CD4-positive, alpha-beta T cell (primary cell): ENCODE measurements at regions of chr5 and their contacts with region 1.

Region 1: GRCh38 chr5:90529194-90529938 is at the start of gene LYSMD3:
- DNase-seq: peak; percentile 95 to 99 (median 97)
- ATAC-seq: peak; percentile 87
- H3K4me3 ChIP-seq: peak within 1 kb of the TSS; percentile 95
- H3K4me3 Mint-ChIP-seq: peak within 1 kb of the TSS; percentile 99
- H3K27ac ChIP-seq: peak within 1 kb of the TSS; percentile 94 to 95
- H3K27ac Mint-ChIP-seq: peak within 1 kb of the TSS; percentile 93
- H3K4me1 ChIP-seq: peaks cover 12% of the 10 kb centered on the region
- H3K4me1 Mint-ChIP-seq: peaks cover 33% of the 10 kb centered on the region
- H3K27me3 ChIP-seq: peaks cover 7 to 17% of the 10 kb centered on the region in 2 experiments
- H3K27me3 Mint-ChIP-seq: peaks cover 21% of the 10 kb centered on the region
- CTCF ChIP-seq: no peak
- total RNA-seq, gene LYSMD3: 27.6 to 32.8 TPM

Region 2: DNA sequence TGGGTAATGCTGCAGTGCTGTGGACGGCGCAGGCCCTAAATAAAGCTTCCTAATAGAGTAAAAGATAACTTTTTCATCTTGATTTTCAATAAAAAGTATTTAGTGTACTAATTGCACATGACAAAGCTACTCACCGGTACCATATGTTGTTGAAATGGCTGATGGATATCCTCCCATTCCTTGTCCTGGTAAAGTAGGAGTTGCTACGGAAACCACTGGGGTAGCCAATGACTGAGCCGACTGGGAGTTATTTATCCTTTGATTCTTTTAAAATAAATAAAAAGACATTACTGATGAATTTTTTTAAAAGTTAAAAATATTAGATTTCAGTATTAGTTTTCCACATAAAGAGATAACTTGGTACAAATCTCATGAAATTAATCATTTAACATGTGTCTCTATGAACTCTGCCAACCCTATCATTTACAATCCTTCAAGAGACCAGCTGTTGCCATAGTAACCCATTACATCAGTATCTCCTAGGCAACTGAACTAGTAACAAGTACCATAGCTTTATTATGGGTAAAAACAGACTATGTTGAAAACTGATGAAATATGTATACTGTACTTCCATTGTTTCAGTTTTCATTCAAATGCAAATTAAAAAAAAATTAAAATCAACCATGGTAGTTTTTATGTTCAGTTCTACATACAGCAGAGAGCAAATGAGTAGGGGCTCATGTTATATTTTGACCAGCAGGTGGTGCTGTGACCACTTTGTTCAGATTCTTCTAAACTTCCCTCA is 1800.1 kb before region 1 on chr5:
- CTCF ChIA-PET with region 1: interaction called, 3 read pairs
- POLR2A ChIA-PET with region 1: no interaction called
- intact Hi-C with region 1: loop called (anchors 5 kb)
- DNase-seq: peak in 13 of 14 experiments; percentile 7 to 79 (median 25)
- ATAC-seq: peak; percentile 83
- H3K4me3 ChIP-seq: no peak overlapping the region
- H3K4me3 Mint-ChIP-seq: no peak overlapping the region
- H3K27ac ChIP-seq: no peak overlapping the region
- H3K27ac Mint-ChIP-seq: no peak overlapping the region
- H3K4me1 ChIP-seq: no peaks in the 10 kb centered on the region
- H3K4me1 Mint-ChIP-seq: peaks cover 4% of the 10 kb centered on the region
- H3K27me3 ChIP-seq: peaks cover 1 to 7% of the 10 kb centered on the region in 2 experiments
- H3K27me3 Mint-ChIP-seq: peaks cover 26% of the 10 kb centered on the region
- CTCF ChIP-seq: peak; percentile 79

Region 3: GRCh38 chr5:90409318-90410177 is 119.8 kb before region 1 on chr5 and contains the start of gene CETN3:
- CTCF ChIA-PET with region 1: interaction called, 8 read pairs
- POLR2A ChIA-PET with region 1: interaction called, 41 read pairs
- intact Hi-C with region 1: loop called (anchors 2 kb)
- DNase-seq: peak; percentile 80 to 95 (median 86)
- ATAC-seq: peak; percentile 91
- H3K4me3 ChIP-seq: peak within 1 kb of the TSS; percentile 82
- H3K4me3 Mint-ChIP-seq: no peak within 1 kb of the TSS
- H3K27ac ChIP-seq: peak within 1 kb of the TSS; percentile 92 to 94
- H3K27ac Mint-ChIP-seq: no peak within 1 kb of the TSS
- H3K4me1 ChIP-seq: peaks cover 7% of the 10 kb centered on the region
- H3K4me1 Mint-ChIP-seq: peaks cover 13% of the 10 kb centered on the region
- H3K27me3 ChIP-seq: no peaks in the 10 kb centered on the region
- H3K27me3 Mint-ChIP-seq: no peaks in the 10 kb centered on the region
- CTCF ChIP-seq: no peak
- total RNA-seq, gene CETN3: 3.2 to 4.9 TPM

Region 4: GRCh38 chr5:90434116-90434714 is 95.2 kb before region 1 on chr5:
- CTCF ChIA-PET with region 1: interaction called, 10 read pairs
- POLR2A ChIA-PET with region 1: interaction called, 17 read pairs
- intact Hi-C with region 1: loop called in 1 of 2 experiments (anchors 1 kb)
- DNase-seq: peak; percentile 17 to 61 (median 38)
- ATAC-seq: peak; percentile 52
- H3K4me3 ChIP-seq: no peak overlapping the region
- H3K4me3 Mint-ChIP-seq: no peak overlapping the region
- H3K27ac ChIP-seq: no peak overlapping the region
- H3K27ac Mint-ChIP-seq: no peak overlapping the region
- H3K4me1 ChIP-seq: no peaks in the 10 kb centered on the region
- H3K4me1 Mint-ChIP-seq: no peaks in the 10 kb centered on the region
- H3K27me3 ChIP-seq: no peaks in the 10 kb centered on the region
- H3K27me3 Mint-ChIP-seq: peaks cover 4% of the 10 kb centered on the region
- CTCF ChIP-seq: peak; percentile 62

Region 5: DNA sequence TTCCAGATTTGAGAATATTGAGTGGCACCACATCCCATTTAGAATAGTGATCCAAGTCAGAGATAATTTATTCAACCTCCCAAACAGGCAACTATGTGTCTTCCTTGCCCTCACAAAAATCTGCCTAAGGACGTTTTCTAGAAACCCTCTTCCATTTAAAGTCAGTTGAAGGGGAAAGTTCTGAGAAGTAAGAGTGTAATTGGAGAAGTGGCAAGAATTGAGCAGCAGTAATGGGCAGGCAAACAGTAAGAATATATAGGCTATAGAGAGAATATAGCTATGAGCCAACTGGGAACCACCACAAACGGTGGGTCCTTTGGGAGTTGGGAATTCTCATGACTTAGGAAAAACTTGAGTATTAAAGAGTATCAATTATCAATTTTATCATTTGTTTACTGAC is 88.7 kb before region 1 on chr5:
- CTCF ChIA-PET with region 1: interaction called, 10 read pairs
- POLR2A ChIA-PET with region 1: interaction called, 17 read pairs
- intact Hi-C with region 1: loop called (anchors 1 kb)
- DNase-seq: no peak
- ATAC-seq: no peak
- H3K4me3 ChIP-seq: no peak overlapping the region
- H3K4me3 Mint-ChIP-seq: no peak overlapping the region
- H3K27ac ChIP-seq: no peak overlapping the region
- H3K27ac Mint-ChIP-seq: no peak overlapping the region
- H3K4me1 ChIP-seq: peaks cover 3% of the 10 kb centered on the region
- H3K4me1 Mint-ChIP-seq: no peaks in the 10 kb centered on the region
- H3K27me3 ChIP-seq: no peaks in the 10 kb centered on the region
- H3K27me3 Mint-ChIP-seq: peaks cover 4% of the 10 kb centered on the region
- CTCF ChIP-seq: no peak

Region 6: DNA sequence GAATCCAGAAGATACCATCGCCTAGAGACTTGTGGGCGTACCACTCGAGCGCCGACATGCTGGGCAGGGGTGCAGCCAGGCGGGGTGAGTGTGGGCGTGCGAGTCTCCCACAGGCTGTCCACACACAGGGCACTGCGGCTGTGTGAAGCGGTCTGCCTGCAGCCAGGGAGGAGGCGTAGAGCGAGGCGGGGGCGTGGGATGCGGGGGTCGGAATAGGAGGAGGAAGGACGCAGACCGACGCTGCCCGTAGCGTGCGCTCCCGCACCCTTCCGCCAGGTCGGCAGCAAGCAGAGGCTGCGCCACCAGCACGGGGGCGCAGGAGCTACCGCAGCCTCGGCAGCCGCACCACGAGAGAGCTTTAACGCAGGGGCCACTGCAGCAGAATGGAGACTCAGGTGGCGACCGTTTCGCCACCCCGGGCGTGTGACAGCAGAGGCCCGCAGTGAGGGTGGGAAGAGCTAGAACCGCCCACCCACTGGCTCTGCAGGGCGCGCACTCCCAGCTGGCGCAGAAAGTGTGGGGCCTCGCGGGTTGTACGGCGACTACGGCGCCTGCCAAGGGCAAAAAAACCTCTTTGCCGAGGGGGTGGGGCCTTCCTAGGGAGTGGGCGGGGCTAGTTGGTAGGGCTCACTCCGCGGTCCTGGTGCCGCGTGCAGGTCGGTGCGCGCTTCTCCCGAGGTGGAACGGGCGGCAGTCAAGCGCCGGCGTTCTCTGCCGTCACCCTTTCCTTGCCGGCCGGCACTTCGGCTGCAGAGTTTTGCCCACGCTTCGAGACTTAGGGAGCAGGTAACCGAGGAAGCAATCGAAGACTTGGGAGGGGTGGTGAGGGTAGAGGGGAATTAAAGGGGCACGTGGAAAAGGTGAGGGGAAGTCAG is 54.9 kb before region 1 on chr5 and contains the starts of genes MBLAC2 and POLR3G:
- CTCF ChIA-PET with region 1: interaction called, 4 read pairs
- POLR2A ChIA-PET with region 1: interaction called, 57 read pairs
- intact Hi-C with region 1: loop called (anchors 1 kb)
- DNase-seq: peak; percentile 89 to 97 (median 93)
- ATAC-seq: peak; percentile 88
- H3K4me3 ChIP-seq: peak within 1 kb of the TSS; percentile 98
- H3K4me3 Mint-ChIP-seq: peak within 1 kb of the TSS; percentile 100
- H3K27ac ChIP-seq: peak within 1 kb of the TSS; percentile 70 to 74
- H3K27ac Mint-ChIP-seq: peak within 1 kb of the TSS; percentile 92
- H3K4me1 ChIP-seq: peaks cover 19% of the 10 kb centered on the region
- H3K4me1 Mint-ChIP-seq: peaks cover 48% of the 10 kb centered on the region
- H3K27me3 ChIP-seq: no peaks in the 10 kb centered on the region
- H3K27me3 Mint-ChIP-seq: no peaks in the 10 kb centered on the region
- CTCF ChIP-seq: peak; percentile 49
- total RNA-seq, gene MBLAC2: 3.9 to 4.1 TPM
- total RNA-seq, gene POLR3G: 0.80 to 2.3 TPM

Region 7: GRCh38 chr5:90518661-90519060 is 10.7 kb before region 1 on chr5:
- CTCF ChIA-PET with region 1: no interaction called
- POLR2A ChIA-PET with region 1: no interaction called
- intact Hi-C with region 1: no loop called
- DNase-seq: no peak
- ATAC-seq: no peak
- H3K4me3 ChIP-seq: no peak overlapping the region
- H3K4me3 Mint-ChIP-seq: no peak overlapping the region
- H3K27ac ChIP-seq: no peak overlapping the region
- H3K27ac Mint-ChIP-seq: no peak overlapping the region
- H3K4me1 ChIP-seq: no peaks in the 10 kb centered on the region
- H3K4me1 Mint-ChIP-seq: peaks cover 17% of the 10 kb centered on the region
- H3K27me3 ChIP-seq: no peaks in the 10 kb centered on the region
- H3K27me3 Mint-ChIP-seq: no peaks in the 10 kb centered on the region
- CTCF ChIP-seq: no peak

Region 8: DNA sequence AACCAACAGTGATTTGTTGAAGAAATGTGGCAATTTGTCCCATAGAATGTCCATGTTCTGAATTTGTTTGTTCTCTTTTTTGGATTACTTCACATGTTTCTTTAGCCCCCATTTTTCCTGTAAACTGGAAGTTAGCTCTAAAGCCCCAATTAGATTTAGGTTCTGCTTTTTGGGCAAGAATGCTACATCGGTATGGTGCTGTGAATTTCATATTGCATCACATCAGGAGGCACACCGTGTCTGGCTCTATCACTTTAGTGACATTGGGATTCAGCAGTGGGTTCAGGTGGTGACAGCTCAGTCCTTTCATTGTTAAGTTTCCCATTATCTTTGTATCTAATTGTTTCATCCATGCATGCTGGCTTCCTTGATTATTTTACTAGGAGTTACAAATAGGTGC is 57.1 kb after region 1 on chr5:
- CTCF ChIA-PET with region 1: no interaction called
- POLR2A ChIA-PET with region 1: no interaction called
- intact Hi-C with region 1: no loop called
- DNase-seq: no peak
- ATAC-seq: no peak
- H3K4me3 ChIP-seq: no peak overlapping the region
- H3K4me3 Mint-ChIP-seq: no peak overlapping the region
- H3K27ac ChIP-seq: no peak overlapping the region
- H3K27ac Mint-ChIP-seq: no peak overlapping the region
- H3K4me1 ChIP-seq: no peaks in the 10 kb centered on the region
- H3K4me1 Mint-ChIP-seq: no peaks in the 10 kb centered on the region
- H3K27me3 ChIP-seq: peaks cover 5 to 15% of the 10 kb centered on the region in 2 experiments
- H3K27me3 Mint-ChIP-seq: peaks cover 44% of the 10 kb centered on the region
- CTCF ChIP-seq: no peak

Region 9: GRCh38 chr5:90598293-90598692 is 68.9 kb after region 1 on chr5:
- CTCF ChIA-PET with region 1: no interaction called
- POLR2A ChIA-PET with region 1: no interaction called
- intact Hi-C with region 1: no loop called
- DNase-seq: no peak
- ATAC-seq: no peak
- H3K4me3 ChIP-seq: no peak overlapping the region
- H3K4me3 Mint-ChIP-seq: no peak overlapping the region
- H3K27ac ChIP-seq: no peak overlapping the region
- H3K27ac Mint-ChIP-seq: no peak overlapping the region
- H3K4me1 ChIP-seq: no peaks in the 10 kb centered on the region
- H3K4me1 Mint-ChIP-seq: no peaks in the 10 kb centered on the region
- H3K27me3 ChIP-seq: no peaks in the 10 kb centered on the region
- H3K27me3 Mint-ChIP-seq: peaks cover 21% of the 10 kb centered on the region
- CTCF ChIP-seq: no peak

Region 10: GRCh38 chr5:90783460-90784333 is 254.3 kb after region 1 on chr5:
- CTCF ChIA-PET with region 1: no interaction called
- POLR2A ChIA-PET with region 1: no interaction called
- intact Hi-C with region 1: loop called in 1 of 2 experiments (anchors 5 kb)
- DNase-seq: peak; percentile 40 to 77 (median 60)
- ATAC-seq: peak; percentile 57
- H3K4me3 ChIP-seq: no peak overlapping the region
- H3K4me3 Mint-ChIP-seq: no peak overlapping the region
- H3K27ac ChIP-seq: no peak overlapping the region
- H3K27ac Mint-ChIP-seq: no peak overlapping the region
- H3K4me1 ChIP-seq: no peaks in the 10 kb centered on the region
- H3K4me1 Mint-ChIP-seq: no peaks in the 10 kb centered on the region
- H3K27me3 ChIP-seq: no peaks in the 10 kb centered on the region
- H3K27me3 Mint-ChIP-seq: peaks cover 14% of the 10 kb centered on the region
- CTCF ChIP-seq: peak; percentile 94